ENCODE measurements at regions of chr12 and their contacts with region 1.

Region 1: DNA sequence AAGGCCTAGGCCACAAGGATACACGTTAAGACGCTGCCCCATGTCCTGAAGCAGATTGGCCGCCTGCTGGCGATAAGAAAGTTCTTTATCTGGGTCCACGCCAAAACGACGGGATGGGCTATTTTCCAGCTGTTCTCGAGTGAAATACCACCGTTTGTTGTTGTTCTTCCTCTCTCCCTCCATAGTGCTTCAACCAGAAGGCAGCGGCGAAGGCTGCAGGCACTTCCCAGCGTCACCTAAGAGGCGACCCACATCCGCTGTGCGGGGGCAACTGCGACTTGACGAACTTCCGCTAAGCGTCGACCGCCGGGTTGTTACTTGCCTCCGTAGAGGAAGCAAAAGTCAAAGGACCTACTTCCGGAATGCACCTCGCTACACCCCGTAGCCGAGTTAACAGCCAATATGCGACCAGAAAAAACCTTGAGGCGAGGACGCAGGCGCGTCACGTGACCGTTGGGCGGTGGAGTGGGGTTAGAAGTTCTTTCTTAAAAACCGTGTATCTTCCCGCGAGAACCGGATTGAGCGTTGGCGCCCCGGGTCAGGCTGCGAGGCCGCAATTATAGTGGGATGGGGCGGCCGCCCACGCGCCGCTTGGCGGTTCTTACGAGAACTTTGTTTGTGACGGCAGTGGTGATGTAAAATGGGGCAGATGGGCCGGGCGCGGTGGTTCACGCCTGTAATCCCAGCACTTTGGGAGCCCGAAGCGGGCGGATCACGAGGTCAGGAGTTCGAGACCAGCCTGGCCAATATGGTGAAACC is at the start of gene CCNT1:
- DNase-seq: peak; percentile 100
- ATAC-seq: peak; percentile 95
- H3K4me3 Mint-ChIP-seq: peak within 1 kb of the TSS; percentile 99
- H3K27ac Mint-ChIP-seq: peak within 1 kb of the TSS; percentile 99
- H3K4me1 Mint-ChIP-seq: peaks cover 37% of the 10 kb centered on the region
- H3K27me3 Mint-ChIP-seq: no peaks in the 10 kb centered on the region
- total RNA-seq, gene CCNT1: 82.2 to 85.1 TPM

Region 2: GRCh38 chr12:48105862-48106680 is 610.6 kb before region 1 on chr12 and contains the start of gene SENP1:
- CTCF ChIA-PET with region 1: no interaction called
- POLR2A ChIA-PET with region 1: no interaction called
- intact Hi-C with region 1: loop called in 1 of 2 experiments (anchors 1 kb)
- DNase-seq: peak; percentile 94
- ATAC-seq: peak; percentile 87
- H3K4me3 Mint-ChIP-seq: peak within 1 kb of the TSS; percentile 95
- H3K27ac Mint-ChIP-seq: peak within 1 kb of the TSS; percentile 98
- H3K4me1 Mint-ChIP-seq: peaks cover 46% of the 10 kb centered on the region
- H3K27me3 Mint-ChIP-seq: no peaks in the 10 kb centered on the region
- total RNA-seq, gene SENP1: 44.4 to 61.8 TPM

Region 3: GRCh38 chr12:48157018-48157888 is 559.4 kb before region 1 on chr12 and contains the start of gene ASB8:
- CTCF ChIA-PET with region 1: no interaction called
- POLR2A ChIA-PET with region 1: no interaction called
- intact Hi-C with region 1: loop called in 1 of 2 experiments (anchors 1 kb)
- DNase-seq: peak; percentile 100
- ATAC-seq: peak; percentile 96
- H3K4me3 Mint-ChIP-seq: peak within 1 kb of the TSS; percentile 88
- H3K27ac Mint-ChIP-seq: peak within 1 kb of the TSS; percentile 94
- H3K4me1 Mint-ChIP-seq: peaks cover 40% of the 10 kb centered on the region
- H3K27me3 Mint-ChIP-seq: no peaks in the 10 kb centered on the region
- total RNA-seq, gene ASB8: 28.8 to 33.0 TPM

Region 4: DNA sequence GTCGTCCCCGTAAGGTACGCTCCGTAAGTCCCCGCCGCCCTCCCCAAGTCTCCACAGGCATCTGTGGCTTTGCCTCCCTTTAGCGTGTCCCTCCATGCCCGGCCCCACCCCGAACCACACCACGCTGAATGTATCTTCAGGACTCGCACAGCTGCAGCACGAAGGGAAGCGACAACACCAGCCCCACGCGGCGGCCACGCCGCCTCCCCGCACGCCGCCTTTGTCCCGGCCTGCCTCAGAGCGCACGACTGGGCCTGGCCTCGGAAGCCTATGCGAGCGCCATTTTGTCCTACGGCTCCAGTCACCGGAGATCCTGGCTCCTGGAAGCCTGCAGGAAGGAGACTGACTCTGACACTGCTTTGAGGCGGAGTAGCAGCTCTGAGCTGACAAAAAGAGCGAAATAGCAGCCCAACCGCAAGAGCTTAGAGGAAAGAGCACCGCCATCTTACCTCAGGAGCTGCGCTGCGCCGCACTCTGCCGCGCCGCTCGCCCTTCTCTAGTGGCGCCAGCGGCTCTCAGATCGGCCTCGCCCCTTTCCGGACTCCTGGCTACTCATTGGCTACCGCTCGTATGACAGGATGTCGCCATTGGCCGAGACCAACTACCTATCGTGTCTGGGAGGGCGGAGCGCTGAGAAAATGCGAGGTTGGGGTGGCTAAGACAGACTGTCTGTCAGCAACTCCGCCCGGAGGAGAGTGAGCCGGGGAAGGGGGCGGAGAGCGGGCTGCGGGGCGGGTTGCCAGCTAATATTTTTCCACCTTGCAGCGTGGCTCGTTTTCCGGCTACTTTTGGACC is 34.7 kb before region 1 on chr12 and contains the start of gene KANSL2:
- CTCF ChIA-PET with region 1: no interaction called
- POLR2A ChIA-PET with region 1: interaction called, 4 read pairs
- intact Hi-C with region 1: loop called (anchors 1 kb)
- DNase-seq: peak; percentile 99
- ATAC-seq: peak; percentile 96
- H3K4me3 Mint-ChIP-seq: peak within 1 kb of the TSS; percentile 87
- H3K27ac Mint-ChIP-seq: peak within 1 kb of the TSS; percentile 91
- H3K4me1 Mint-ChIP-seq: peaks cover 41% of the 10 kb centered on the region
- H3K27me3 Mint-ChIP-seq: no peaks in the 10 kb centered on the region
- total RNA-seq, gene KANSL2: 44.0 to 59.8 TPM

Region 5: GRCh38 chr12:49069507-49070346 is 353.1 kb after region 1 on chr12 and contains the start of gene RHEBL1:
- CTCF ChIA-PET with region 1: no interaction called
- POLR2A ChIA-PET with region 1: no interaction called
- intact Hi-C with region 1: loop called in 1 of 2 experiments (anchors 1 kb)
- DNase-seq: peak; percentile 100
- ATAC-seq: peak; percentile 100
- H3K4me3 Mint-ChIP-seq: peak within 1 kb of the TSS; percentile 94
- H3K27ac Mint-ChIP-seq: peak within 1 kb of the TSS; percentile 91
- H3K4me1 Mint-ChIP-seq: peaks cover 15% of the 10 kb centered on the region
- H3K27me3 Mint-ChIP-seq: no peaks in the 10 kb centered on the region
- total RNA-seq, gene RHEBL1: 6.7 to 13.3 TPM